Lower leg skin (tissue), 4 donors: ENCODE measurements at regions of chr3 and their contacts with region 1.

Region 1: GRCh38 chr3:8622873-8623691 is 21.5 kb downstream of the SSUH2 start:
- DNase-seq: peak; percentile 63 to 93
- H3K4me3 ChIP-seq: no peak overlapping the region
- CTCF ChIP-seq: peak in 1 of 3 donors; percentile 85
- POLR2A ChIP-seq: no peak

Region 2: DNA sequence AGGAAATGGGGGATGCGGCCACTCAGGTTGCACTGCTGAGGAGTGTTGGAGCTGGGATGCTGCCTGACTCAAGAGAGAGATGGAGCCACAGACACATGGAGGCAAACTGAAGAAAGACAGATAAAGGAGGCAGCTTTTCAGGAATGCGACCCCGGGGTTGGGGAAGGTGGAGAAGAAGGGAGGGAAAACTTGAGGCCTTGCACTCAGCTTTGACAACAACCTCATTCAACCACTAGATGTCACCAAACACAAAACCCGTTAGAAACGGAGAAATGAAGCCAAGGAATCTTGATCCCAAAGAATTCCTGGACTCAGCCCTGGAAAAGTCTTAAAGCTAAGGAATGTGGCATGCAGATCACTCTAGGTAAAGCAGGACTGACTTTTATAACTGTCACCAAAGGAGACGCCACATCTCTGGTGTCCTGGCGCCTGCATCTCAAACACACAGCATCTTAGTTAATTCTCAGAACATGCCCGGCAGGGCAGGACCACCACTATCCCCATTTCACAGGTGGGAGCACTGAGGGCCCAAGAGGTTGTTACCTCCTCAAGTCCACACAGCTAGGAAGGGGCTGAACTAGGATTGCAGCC is 181.0 kb before region 1 on chr3:
- intact Hi-C with region 1: loop called (anchors 5 kb)
- DNase-seq: peak in 1 of 2 donors; percentile 25
- H3K4me3 ChIP-seq: no peak overlapping the region
- CTCF ChIP-seq: no peak
- POLR2A ChIP-seq: no peak